AG04450 (cell line): ENCODE measurements at regions of chr17 and their contacts with region 1.

Region 1: GRCh38 chr17:74923533-74924249 is 382 bp upstream of the OTOP2 start:
- DNase-seq: no peak
- H3K4me3 ChIP-seq: no peak overlapping the region; the same call in 1 of the 2 replicates
- H3K27ac ChIP-seq: no peak overlapping the region
- H3K27me3 ChIP-seq: peaks cover 67% of the 10 kb centered on the region
- CTCF ChIP-seq: peak; percentile 54

Region 2: GRCh38 chr17:75191584-75191983 is 267.9 kb after region 1 on chr17:
- CTCF ChIA-PET with region 1: interaction called, 10 read pairs
- POLR2A ChIA-PET with region 1: no interaction called
- DNase-seq: no peak
- H3K4me3 ChIP-seq: no peak overlapping the region
- H3K27ac ChIP-seq: no peak overlapping the region
- H3K27me3 ChIP-seq: no peaks in the 10 kb centered on the region
- CTCF ChIP-seq: no peak